PC-3 (cell line): ENCODE measurements at regions of chr3 and their contacts with region 1.

Region 1: DNA sequence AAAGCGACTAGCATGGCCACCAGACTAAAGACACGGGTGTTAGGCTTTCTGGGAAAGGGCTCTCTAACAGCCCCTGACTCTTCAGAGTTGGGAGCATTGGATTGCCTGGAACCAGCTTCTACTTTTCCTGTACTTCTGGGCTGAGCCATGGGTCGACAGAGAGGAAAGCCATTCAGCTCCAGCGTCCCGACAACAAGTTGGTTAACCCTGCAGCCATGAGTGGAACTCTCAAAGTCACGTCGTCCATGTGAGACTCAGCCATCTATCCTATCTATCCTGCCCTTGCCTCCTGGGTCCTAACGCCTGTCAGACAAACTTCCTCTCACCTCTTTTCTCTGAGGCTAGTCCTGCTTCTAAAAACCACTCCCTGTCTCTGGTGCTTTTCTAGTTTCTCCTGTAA is 32.6 kb upstream of the TBC1D5 start:
- DNase-seq: no peak
- ATAC-seq: no peak
- H3K4me3 ChIP-seq: no peak overlapping the region
- H3K27ac ChIP-seq: no peak overlapping the region
- H3K4me1 ChIP-seq: no peaks in the 10 kb centered on the region
- H3K27me3 ChIP-seq: no peaks in the 10 kb centered on the region
- CTCF ChIP-seq: no peak

Region 2: GRCh38 chr3:17747174-17747889 is 27.7 kb before region 1 on chr3:
- CTCF ChIA-PET with region 1: no interaction called
- POLR2A ChIA-PET with region 1: no interaction called
- intact Hi-C with region 1: no loop called
- DNase-seq: no peak
- ATAC-seq: no peak
- H3K4me3 ChIP-seq: no peak overlapping the region
- H3K27ac ChIP-seq: no peak overlapping the region
- H3K4me1 ChIP-seq: peaks cover 8% of the 10 kb centered on the region
- H3K27me3 ChIP-seq: no peaks in the 10 kb centered on the region
- CTCF ChIP-seq: no peak

Region 3: GRCh38 chr3:17810759-17811158 is 35.7 kb after region 1 on chr3:
- CTCF ChIA-PET with region 1: interaction called, 3 read pairs
- POLR2A ChIA-PET with region 1: no interaction called
- intact Hi-C with region 1: loop called (anchors 1 kb)
- DNase-seq: peak; percentile 83
- ATAC-seq: peak; percentile 62
- H3K4me3 ChIP-seq: no peak overlapping the region
- H3K27ac ChIP-seq: peak overlapping the region; percentile 50
- H3K4me1 ChIP-seq: peaks cover 40% of the 10 kb centered on the region
- H3K27me3 ChIP-seq: no peaks in the 10 kb centered on the region
- CTCF ChIP-seq: peak; percentile 68

Region 4: GRCh38 chr3:17831366-17831765 is 56.3 kb after region 1 on chr3:
- CTCF ChIA-PET with region 1: no interaction called
- POLR2A ChIA-PET with region 1: no interaction called
- intact Hi-C with region 1: no loop called
- DNase-seq: peak; percentile 56
- ATAC-seq: peak; percentile 50
- H3K4me3 ChIP-seq: no peak overlapping the region
- H3K27ac ChIP-seq: no peak overlapping the region
- H3K4me1 ChIP-seq: peaks cover 29% of the 10 kb centered on the region
- H3K27me3 ChIP-seq: no peaks in the 10 kb centered on the region
- CTCF ChIP-seq: no peak